IMR-90 (cell line): ENCODE measurements at regions of chr2 and their contacts with region 1.

Region 1: GRCh38 chr2:10634495-10634894 is 55.3 kb downstream of the NOL10 start:
- DNase-seq: peak; percentile 26
- ATAC-seq: peak; percentile 59
- H3K4me3 ChIP-seq: no peak overlapping the region
- H3K27ac ChIP-seq: no peak overlapping the region
- H3K4me1 ChIP-seq: no peaks in the 10 kb centered on the region; the same call in 1 of the 2 replicates
- H3K27me3 ChIP-seq: no peaks in the 10 kb centered on the region
- CTCF ChIP-seq: no peak
- POLR2A ChIP-seq: no peak
- RAD21 ChIP-seq: no peak

Region 2: GRCh38 chr2:10620481-10620880 is 14.0 kb before region 1 on chr2:
- CTCF ChIA-PET with region 1: no interaction called
- POLR2A ChIA-PET with region 1: interaction called, 10 read pairs
- dilution Hi-C with region 1: no loop called
- in situ Hi-C with region 1: no loop called
- intact Hi-C with region 1: no loop called
- DNase-seq: peak; percentile 94
- ATAC-seq: peak; percentile 78
- H3K4me3 ChIP-seq: no peak overlapping the region
- H3K27ac ChIP-seq: no peak overlapping the region
- H3K4me1 ChIP-seq: peaks cover 5% of the 10 kb centered on the region
- H3K27me3 ChIP-seq: no peaks in the 10 kb centered on the region
- CTCF ChIP-seq: no peak
- POLR2A ChIP-seq: no peak
- RAD21 ChIP-seq: no peak

Region 3: DNA sequence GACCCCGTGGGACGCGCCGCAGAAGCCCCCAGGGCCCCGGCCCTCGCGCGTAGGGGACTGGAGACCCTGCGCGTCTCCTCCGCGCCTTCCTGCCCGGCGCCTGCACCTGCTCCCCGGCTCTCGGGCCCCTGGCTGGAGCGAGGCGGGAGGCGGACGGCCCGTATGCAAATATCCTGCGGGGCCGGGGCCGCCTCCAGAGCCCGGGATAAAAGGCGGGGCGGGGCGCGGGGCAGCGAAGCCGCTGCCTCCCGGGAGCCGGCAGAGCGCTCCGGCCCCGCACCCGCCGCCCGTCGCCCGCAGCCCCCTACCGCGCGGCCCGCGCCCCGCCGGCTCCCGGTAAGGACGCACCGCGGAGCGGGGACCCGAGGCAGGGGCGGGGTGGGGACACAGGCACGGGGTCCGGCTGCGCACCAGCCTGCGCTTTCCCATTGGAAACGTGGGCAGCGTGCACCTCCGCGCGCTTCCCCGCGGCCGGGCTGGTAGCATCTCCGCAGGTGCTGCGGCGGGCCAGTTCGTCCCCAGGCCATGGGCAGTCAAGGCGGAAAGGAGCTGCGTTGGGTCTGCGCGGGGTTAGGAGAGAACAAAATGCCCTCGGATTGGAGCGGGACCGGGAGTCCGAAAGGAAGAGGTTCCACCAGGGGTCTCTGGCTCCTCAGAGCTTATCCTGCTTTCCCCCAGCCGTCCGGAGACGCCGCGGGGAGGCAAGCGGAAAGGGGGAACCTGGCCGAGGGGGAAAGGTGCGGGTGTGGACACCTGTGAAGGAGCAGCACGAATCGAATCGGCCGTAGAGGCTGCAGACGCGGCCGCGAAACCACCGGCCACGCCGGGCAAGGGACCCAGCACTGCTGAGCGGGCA is 87.1 kb after region 1 on chr2 and contains the start of gene ATP6V1C2:
- CTCF ChIA-PET with region 1: no interaction called
- POLR2A ChIA-PET with region 1: no interaction called
- dilution Hi-C with region 1: no loop called
- in situ Hi-C with region 1: no loop called
- intact Hi-C with region 1: no loop called
- DNase-seq: no peak
- ATAC-seq: peak; percentile 52
- H3K4me3 ChIP-seq: peak within 1 kb of the TSS; percentile 34
- H3K27ac ChIP-seq: no peak within 1 kb of the TSS
- H3K4me1 ChIP-seq: no peaks in the 10 kb centered on the region; the same call in 1 of the 2 replicates
- H3K27me3 ChIP-seq: peaks cover 64% of the 10 kb centered on the region
- CTCF ChIP-seq: no peak
- POLR2A ChIP-seq: no peak
- RAD21 ChIP-seq: no peak
- total RNA-seq, gene ATP6V1C2: not detected in 2 replicates

Region 4: GRCh38 chr2:10762651-10763465 is 128.4 kb after region 1 on chr2:
- CTCF ChIA-PET with region 1: no interaction called
- POLR2A ChIA-PET with region 1: interaction called, 16 read pairs
- dilution Hi-C with region 1: no loop called
- in situ Hi-C with region 1: no loop called
- intact Hi-C with region 1: no loop called
- DNase-seq: peak; percentile 7
- ATAC-seq: peak; percentile 80
- H3K4me3 ChIP-seq: no peak overlapping the region
- H3K27ac ChIP-seq: no peak overlapping the region
- H3K4me1 ChIP-seq: no peaks in the 10 kb centered on the region
- H3K27me3 ChIP-seq: peaks cover 28% of the 10 kb centered on the region; the same call in 1 of the 2 replicates
- CTCF ChIP-seq: no peak
- POLR2A ChIP-seq: no peak
- RAD21 ChIP-seq: no peak